ENCODE measurements at regions of chr17 and their contacts with region 1.

Region 1: DNA sequence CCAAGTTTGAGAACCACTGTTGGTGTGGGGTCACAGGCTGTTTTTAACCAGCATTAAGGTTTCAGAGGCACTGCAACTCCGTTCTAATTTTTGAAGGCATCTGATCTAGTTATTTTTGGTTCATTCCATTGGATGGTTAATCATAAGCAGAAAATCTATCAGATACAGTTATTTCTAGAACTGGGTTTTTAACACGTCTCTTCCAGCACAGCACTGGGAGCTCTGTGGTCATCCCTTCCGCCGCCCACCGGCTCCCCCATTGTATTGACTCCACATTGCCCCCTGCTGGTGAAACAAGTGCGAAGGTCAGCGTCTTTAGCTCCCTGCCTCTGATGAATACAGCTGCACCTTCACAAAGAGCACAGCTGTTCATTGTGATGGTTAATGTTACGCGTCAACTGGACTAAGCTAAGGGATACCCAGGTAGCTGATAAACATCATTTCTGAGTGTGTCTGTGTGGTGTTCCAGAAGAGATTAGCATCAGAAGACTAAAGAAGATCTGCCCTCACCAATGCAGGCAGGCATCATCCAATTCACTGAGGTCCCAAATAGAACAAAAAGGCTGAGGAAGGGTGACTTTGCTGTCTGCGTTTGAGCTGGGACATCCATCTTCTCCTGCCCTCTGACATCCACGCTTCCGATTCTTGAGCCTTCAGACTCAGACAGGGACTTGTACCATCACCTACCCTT is 8.5 kb downstream of the CCL18 start:
- DNase-seq: peak; percentile 90
- H3K4me3 Mint-ChIP-seq: no peak overlapping the region
- H3K27ac Mint-ChIP-seq: peak overlapping the region; percentile 24
- H3K4me1 Mint-ChIP-seq: peaks cover 28% of the 10 kb centered on the region
- H3K27me3 Mint-ChIP-seq: peaks cover 7% of the 10 kb centered on the region

Region 2: GRCh38 chr17:35849469-35850348 is 222.9 kb before region 1 on chr17:
- CTCF ChIA-PET with region 1: interaction called, 3 read pairs
- POLR2A ChIA-PET with region 1: no interaction called
- intact Hi-C with region 1: loop called (anchors 5 kb)
- DNase-seq: peak; percentile 62
- H3K4me3 Mint-ChIP-seq: no peak overlapping the region
- H3K27ac Mint-ChIP-seq: no peak overlapping the region
- H3K4me1 Mint-ChIP-seq: peaks cover 13% of the 10 kb centered on the region
- H3K27me3 Mint-ChIP-seq: no peaks in the 10 kb centered on the region

Region 3: GRCh38 chr17:35870906-35871819 is 201.4 kb before region 1 on chr17:
- CTCF ChIA-PET with region 1: no interaction called
- POLR2A ChIA-PET with region 1: no interaction called
- intact Hi-C with region 1: no loop called
- DNase-seq: peak; percentile 35
- H3K4me3 Mint-ChIP-seq: no peak overlapping the region
- H3K27ac Mint-ChIP-seq: no peak overlapping the region
- H3K4me1 Mint-ChIP-seq: peaks cover 16% of the 10 kb centered on the region
- H3K27me3 Mint-ChIP-seq: no peaks in the 10 kb centered on the region

Region 4: DNA sequence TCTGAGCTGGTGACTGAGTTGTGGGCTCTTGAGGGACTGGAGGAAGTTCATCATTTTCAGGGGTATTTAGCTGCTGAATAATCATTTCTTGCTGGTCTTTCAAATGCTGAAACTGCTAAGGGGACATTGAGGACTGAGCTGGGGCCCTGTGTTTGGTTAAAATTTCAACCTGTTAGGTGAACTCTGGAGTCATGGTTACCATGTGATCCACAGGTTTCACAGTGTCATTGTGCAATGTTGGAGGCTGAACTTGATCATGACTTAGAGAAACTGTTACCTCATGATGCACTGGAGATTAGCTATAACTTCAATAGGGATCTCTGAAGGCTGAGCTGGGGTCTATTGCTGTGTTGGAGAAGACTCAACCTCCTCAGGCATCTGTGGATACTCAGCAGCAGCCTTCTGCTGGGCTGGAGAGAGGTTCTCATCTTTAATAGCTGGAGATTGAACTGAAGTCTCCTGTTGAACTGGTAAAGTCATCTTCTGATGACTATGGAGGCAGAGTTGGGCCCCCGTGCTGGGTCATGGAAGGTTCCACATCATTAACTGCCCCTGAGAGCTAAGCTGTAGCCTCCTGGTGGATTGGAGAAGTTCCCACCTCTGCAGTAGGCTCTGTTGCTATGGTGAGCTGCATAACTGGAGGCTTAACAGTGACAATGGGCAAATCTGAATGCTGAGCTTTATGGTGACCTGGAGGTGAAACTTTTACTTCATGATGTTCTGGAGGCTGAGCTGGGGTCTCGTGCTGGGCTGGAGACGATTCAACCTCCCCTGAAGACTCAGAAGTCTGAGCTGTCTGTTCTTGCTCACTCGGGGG is 157.2 kb before region 1 on chr17:
- CTCF ChIA-PET with region 1: no interaction called
- POLR2A ChIA-PET with region 1: no interaction called
- intact Hi-C with region 1: no loop called
- DNase-seq: no peak
- H3K4me3 Mint-ChIP-seq: no peak overlapping the region
- H3K27ac Mint-ChIP-seq: no peak overlapping the region
- H3K4me1 Mint-ChIP-seq: peaks cover 5% of the 10 kb centered on the region
- H3K27me3 Mint-ChIP-seq: no peaks in the 10 kb centered on the region

Region 5: DNA sequence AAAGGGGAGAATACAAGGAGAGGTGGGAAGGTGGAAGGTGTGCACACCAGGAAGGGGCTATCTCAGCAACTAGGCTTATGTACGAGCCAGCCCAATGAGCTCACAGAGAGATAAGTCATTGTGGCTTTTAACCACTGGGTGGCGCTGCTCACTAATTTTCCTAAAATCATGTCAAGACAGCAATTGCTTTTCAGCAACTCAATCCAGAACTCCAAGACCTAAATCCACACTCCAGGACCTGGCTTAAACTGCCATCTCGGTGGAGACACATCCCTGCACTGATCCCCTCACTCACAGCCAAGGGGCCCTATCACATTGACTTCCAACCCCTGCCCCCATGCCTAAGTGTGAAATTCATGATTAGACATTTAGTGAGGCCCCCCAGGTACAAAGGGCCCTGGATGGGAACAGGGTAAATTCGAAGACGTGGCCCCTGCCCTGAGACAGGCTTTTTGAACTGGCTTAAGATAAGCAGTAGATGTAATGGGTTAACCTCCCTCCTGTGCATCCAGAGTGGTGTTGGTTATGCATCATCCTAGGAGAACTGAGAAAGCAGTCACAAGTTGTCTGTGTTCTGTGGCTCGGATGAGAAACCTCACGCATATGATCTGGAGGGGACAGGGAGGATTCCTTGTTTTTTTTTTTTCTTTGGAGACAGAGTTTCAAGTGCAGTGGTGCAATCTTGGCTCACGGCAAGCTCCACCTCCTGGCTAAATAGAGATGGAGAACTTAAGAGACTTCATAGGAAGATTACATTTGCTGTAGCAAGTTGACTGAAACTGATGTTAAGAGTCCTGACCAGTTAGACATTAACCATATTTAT is 102.8 kb before region 1 on chr17:
- CTCF ChIA-PET with region 1: interaction called, 80 read pairs
- POLR2A ChIA-PET with region 1: no interaction called
- intact Hi-C with region 1: loop called (anchors 2 kb)
- DNase-seq: peak; percentile 81
- H3K4me3 Mint-ChIP-seq: no peak overlapping the region
- H3K27ac Mint-ChIP-seq: no peak overlapping the region
- H3K4me1 Mint-ChIP-seq: no peaks in the 10 kb centered on the region
- H3K27me3 Mint-ChIP-seq: peaks cover 1% of the 10 kb centered on the region

Region 6: DNA sequence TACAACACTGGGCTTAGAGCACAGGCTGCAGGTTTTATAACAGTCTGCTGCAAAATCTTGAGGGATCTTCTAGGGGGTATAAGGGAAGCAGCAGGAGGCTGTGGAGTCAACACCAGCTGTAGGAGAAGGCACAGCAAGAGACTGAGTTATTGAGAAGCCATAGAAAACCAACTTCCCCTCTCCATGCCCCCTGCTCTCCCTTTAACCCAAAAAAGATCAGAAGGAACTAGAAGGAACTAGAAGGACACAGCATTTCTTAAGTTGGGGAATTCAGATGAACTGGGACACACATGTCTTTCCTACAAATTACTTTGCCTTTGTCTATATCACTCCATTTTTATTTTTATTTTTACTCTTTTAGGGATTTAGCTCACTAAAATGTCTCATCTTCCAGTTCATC is 14.7 kb before region 1 on chr17:
- CTCF ChIA-PET with region 1: interaction called, 15 read pairs
- POLR2A ChIA-PET with region 1: no interaction called
- intact Hi-C with region 1: no loop called
- DNase-seq: no peak
- H3K4me3 Mint-ChIP-seq: no peak overlapping the region
- H3K27ac Mint-ChIP-seq: no peak overlapping the region
- H3K4me1 Mint-ChIP-seq: no peaks in the 10 kb centered on the region
- H3K27me3 Mint-ChIP-seq: peaks cover 5% of the 10 kb centered on the region

Region 7: DNA sequence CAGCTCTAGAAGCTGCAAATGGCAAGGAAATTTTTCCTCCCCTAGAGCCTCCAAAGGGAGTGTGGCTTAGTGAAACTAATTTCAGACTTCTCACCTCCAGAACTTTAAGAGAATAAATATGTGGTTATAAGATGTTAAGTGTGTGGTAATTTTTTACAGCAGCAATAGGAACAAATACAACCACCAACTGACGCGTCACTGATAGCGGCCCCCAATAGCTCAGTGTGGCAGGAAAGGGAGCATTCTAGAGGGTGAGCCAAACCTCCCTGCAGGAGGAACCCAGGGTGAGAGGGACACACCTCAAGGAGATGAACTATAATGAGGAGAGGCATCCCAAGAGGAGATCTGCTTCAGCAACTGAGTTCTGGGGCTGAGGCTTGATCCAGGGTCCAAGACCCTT is 35.1 kb after region 1 on chr17:
- CTCF ChIA-PET with region 1: interaction called, 12 read pairs
- POLR2A ChIA-PET with region 1: interaction called, 4 read pairs
- intact Hi-C with region 1: no loop called
- DNase-seq: no peak
- H3K4me3 Mint-ChIP-seq: no peak overlapping the region
- H3K27ac Mint-ChIP-seq: no peak overlapping the region
- H3K4me1 Mint-ChIP-seq: peaks cover 16% of the 10 kb centered on the region
- H3K27me3 Mint-ChIP-seq: peaks cover 19% of the 10 kb centered on the region